ENCODE measurements at regions of chr1 and their contacts with region 1.

Region 1: GRCh38 chr1:94787691-94788090 is 32.5 kb upstream of the SLC44A3 start:
- DNase-seq: no peak
- H3K4me3 Mint-ChIP-seq: no peak overlapping the region
- H3K27ac Mint-ChIP-seq: no peak overlapping the region
- H3K4me1 Mint-ChIP-seq: peaks cover 7% of the 10 kb centered on the region
- H3K27me3 Mint-ChIP-seq: peaks cover 33% of the 10 kb centered on the region

Region 2: GRCh38 chr1:94713472-94714141 is 74.1 kb before region 1 on chr1:
- intact Hi-C with region 1: no loop called
- DNase-seq: no peak
- H3K4me3 Mint-ChIP-seq: no peak overlapping the region
- H3K27ac Mint-ChIP-seq: no peak overlapping the region
- H3K4me1 Mint-ChIP-seq: peaks cover 2% of the 10 kb centered on the region
- H3K27me3 Mint-ChIP-seq: peaks cover 13% of the 10 kb centered on the region

Region 3: GRCh38 chr1:94734963-94735899 is 52.5 kb before region 1 on chr1:
- intact Hi-C with region 1: loop called (anchors 5 kb)
- DNase-seq: no peak
- H3K4me3 Mint-ChIP-seq: no peak overlapping the region
- H3K27ac Mint-ChIP-seq: no peak overlapping the region
- H3K4me1 Mint-ChIP-seq: peaks cover 19% of the 10 kb centered on the region
- H3K27me3 Mint-ChIP-seq: peaks cover 20% of the 10 kb centered on the region